Caco-2 (cell line): ENCODE measurements at regions of chr20 and their contacts with region 1.

Region 1: GRCh38 chr20:53800808-53801604 is 207.4 kb upstream of the ZNF217 start:
- DNase-seq: peak; percentile 97 to 99
- H3K4me3 ChIP-seq: peak overlapping the region; percentile 21
- H3K4me3 Mint-ChIP-seq: peak overlapping the region; percentile 74
- H3K27ac Mint-ChIP-seq: peak overlapping the region; percentile 95
- H3K4me1 ChIP-seq: peaks cover 54% of the 10 kb centered on the region
- H3K4me1 Mint-ChIP-seq: peaks cover 67% of the 10 kb centered on the region
- H3K27me3 ChIP-seq: no peaks in the 10 kb centered on the region
- H3K27me3 Mint-ChIP-seq: no peaks in the 10 kb centered on the region
- CTCF ChIP-seq: no peak

Region 2: GRCh38 chr20:53600271-53600632 is 200.8 kb before region 1 on chr20:
- CTCF ChIA-PET with region 1: no interaction called
- POLR2A ChIA-PET with region 1: no interaction called
- intact Hi-C with region 1: no loop called
- DNase-seq: peak in 1 of 2 experiments; percentile 13
- H3K4me3 ChIP-seq: no peak overlapping the region
- H3K4me3 Mint-ChIP-seq: no peak overlapping the region
- H3K27ac Mint-ChIP-seq: no peak overlapping the region
- H3K4me1 ChIP-seq: peaks cover 17% of the 10 kb centered on the region
- H3K4me1 Mint-ChIP-seq: peaks cover 28% of the 10 kb centered on the region
- H3K27me3 ChIP-seq: no peaks in the 10 kb centered on the region
- H3K27me3 Mint-ChIP-seq: no peaks in the 10 kb centered on the region
- CTCF ChIP-seq: no peak

Region 3: DNA sequence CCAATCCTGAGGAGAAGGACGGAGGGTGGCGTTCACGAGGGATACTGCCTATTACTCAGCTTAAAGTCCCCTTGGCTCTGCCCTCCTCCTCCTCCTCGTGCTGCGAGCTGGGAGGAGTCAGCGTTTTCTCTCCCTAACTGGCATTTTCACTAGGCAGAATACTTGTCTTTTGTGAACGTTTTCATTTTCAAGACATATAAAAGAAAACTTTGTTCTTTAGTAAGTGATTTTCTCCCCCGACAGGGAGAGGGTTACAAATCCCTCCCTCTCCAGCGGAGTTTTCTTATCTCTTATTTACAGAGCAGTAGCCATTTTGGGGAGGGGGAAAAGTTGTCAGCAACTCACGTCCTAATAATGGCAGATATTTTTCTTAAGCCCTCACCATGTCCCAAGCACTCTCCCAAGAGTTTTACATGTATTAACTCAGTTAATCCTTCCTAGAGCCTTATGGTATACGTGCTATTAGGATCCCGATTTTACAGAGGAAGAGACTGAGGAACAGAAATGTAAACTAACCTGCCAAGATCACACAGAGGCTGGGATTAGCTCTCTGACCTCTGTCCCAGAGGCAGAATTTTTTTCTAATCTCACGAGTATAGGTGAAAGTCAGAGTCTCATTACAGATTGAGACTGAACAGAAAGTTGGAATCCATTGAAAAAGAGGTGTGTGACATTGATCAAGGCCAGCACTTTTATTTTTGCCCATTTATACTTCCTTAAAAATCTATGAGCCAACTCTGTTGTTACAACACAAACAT is 177.4 kb before region 1 on chr20:
- CTCF ChIA-PET with region 1: no interaction called
- POLR2A ChIA-PET with region 1: no interaction called
- intact Hi-C with region 1: loop called (anchors 1 kb)
- DNase-seq: peak; percentile 86 to 89
- H3K4me3 ChIP-seq: peak overlapping the region; percentile 41
- H3K4me3 Mint-ChIP-seq: peak overlapping the region; percentile 83
- H3K27ac Mint-ChIP-seq: peak overlapping the region; percentile 97
- H3K4me1 ChIP-seq: peaks cover 33% of the 10 kb centered on the region
- H3K4me1 Mint-ChIP-seq: peaks cover 24% of the 10 kb centered on the region
- H3K27me3 ChIP-seq: no peaks in the 10 kb centered on the region
- H3K27me3 Mint-ChIP-seq: no peaks in the 10 kb centered on the region
- CTCF ChIP-seq: peak in 1 of 2 experiments; percentile 35

Region 4: DNA sequence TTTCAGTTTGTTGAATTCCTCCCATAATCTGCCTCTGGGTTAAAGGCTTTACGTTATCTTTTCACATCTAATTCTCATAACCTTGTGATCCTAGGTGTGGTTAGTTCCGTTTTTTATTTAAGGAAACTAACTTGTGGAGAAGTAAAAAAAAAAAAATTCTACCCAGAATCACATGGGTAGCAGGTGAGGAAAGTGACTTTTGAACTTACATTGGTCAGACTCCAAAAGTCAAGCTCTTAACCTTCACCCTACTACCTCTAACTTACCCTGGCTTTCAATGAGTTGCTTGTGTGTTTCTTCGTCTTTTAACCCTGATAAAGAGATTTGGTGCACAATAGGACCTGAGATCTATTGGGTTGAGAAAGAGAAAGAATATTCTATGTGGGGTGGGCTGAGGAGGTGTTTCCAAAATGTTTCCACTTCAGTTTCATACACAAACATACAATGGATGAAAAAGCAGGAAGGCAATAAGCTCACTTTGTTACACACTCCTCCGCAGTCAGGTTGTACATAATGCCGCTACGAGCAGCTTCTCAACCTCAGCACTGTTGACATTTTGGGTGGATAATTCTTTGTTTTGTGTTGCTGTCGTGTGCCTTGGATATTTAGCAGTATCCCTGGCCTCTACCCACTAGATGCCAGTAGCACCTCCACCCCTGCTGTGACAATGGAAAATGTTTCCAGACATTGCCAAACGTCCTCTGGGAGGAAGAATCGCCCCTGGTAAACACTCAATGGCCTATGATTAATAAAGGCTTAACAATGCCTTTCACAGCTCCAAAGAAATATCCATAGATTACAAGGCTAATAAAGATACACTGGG is 14.3 kb before region 1 on chr20:
- CTCF ChIA-PET with region 1: interaction called, 14 read pairs
- POLR2A ChIA-PET with region 1: interaction called, 11 read pairs
- intact Hi-C with region 1: loop called (anchors 1 kb)
- DNase-seq: peak; percentile 47 to 67
- H3K4me3 ChIP-seq: no peak overlapping the region; the same call in 1 of the 2 replicates
- H3K4me3 Mint-ChIP-seq: peak overlapping the region; percentile 39
- H3K27ac Mint-ChIP-seq: peak overlapping the region; percentile 59
- H3K4me1 ChIP-seq: peaks cover 71% of the 10 kb centered on the region
- H3K4me1 Mint-ChIP-seq: peaks cover 70% of the 10 kb centered on the region
- H3K27me3 ChIP-seq: no peaks in the 10 kb centered on the region
- H3K27me3 Mint-ChIP-seq: no peaks in the 10 kb centered on the region
- CTCF ChIP-seq: peak in 1 of 2 experiments; percentile 13

Region 5: GRCh38 chr20:53837126-53837826 is 36.3 kb after region 1 on chr20:
- CTCF ChIA-PET with region 1: no interaction called
- POLR2A ChIA-PET with region 1: interaction called, 3 read pairs
- intact Hi-C with region 1: loop called (anchors 1 kb)
- DNase-seq: peak; percentile 61 to 85
- H3K4me3 ChIP-seq: no peak overlapping the region
- H3K4me3 Mint-ChIP-seq: no peak overlapping the region
- H3K27ac Mint-ChIP-seq: peak overlapping the region; percentile 52
- H3K4me1 ChIP-seq: peaks cover 33% of the 10 kb centered on the region
- H3K4me1 Mint-ChIP-seq: peaks cover 23% of the 10 kb centered on the region
- H3K27me3 ChIP-seq: no peaks in the 10 kb centered on the region
- H3K27me3 Mint-ChIP-seq: no peaks in the 10 kb centered on the region
- CTCF ChIP-seq: no peak